ENCODE measurements at regions of chr18 and their contacts with region 1.

Region 1: DNA sequence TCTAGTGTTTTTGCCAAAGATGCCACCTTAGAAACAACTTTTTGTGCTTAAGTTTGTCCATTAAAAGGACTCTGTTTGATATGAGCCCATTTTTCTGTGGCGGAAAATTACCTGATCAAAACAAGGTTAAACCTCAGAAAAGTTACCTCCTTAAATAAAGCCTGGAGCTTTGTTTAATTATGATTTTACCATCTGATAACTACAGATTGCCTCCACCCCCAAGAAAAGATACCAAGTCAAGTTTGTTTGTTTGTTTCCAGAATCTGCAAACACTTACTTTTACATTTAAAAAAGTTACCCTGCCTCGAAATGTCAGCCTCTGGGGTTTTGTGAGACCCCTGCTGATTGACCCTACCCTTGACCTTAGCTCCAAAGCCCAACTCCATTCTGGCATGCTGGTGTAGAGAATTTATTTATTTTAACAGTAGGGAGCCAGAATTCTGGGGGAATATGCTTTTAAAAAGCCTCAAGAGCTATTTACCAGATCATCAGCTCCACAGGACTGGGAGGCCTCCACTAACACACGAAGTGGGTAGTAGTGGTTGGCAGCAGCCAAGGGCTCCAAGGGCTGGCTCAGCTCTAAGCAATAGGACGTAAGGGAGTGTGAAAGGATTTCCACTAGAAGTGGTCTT is 23.3 kb upstream of the GREB1L start:
- DNase-seq: no peak

Region 2: GRCh38 chr18:21444465-21445023 is 225.8 kb after region 1 on chr18:
- in situ Hi-C with region 1: loop called (anchors 25 kb)
- DNase-seq: peak; percentile 50

Measured in KBM-7 (cell line).